Endothelial cell of umbilical vein (primary cell): ENCODE measurements at regions of chr2 and their contacts with region 1.

Region 1: GRCh38 chr2:172465417-172466334 is 38.3 kb downstream of the ITGA6 start:
- DNase-seq: peak; percentile 79
- H3K4me3 ChIP-seq: no peak overlapping the region
- H3K27ac ChIP-seq: no peak overlapping the region
- H3K4me1 ChIP-seq: peaks cover 27% of the 10 kb centered on the region
- H3K27me3 ChIP-seq: no peaks in the 10 kb centered on the region
- CTCF ChIP-seq: peak; percentile 71 to 75
- POLR2A ChIP-seq: no peak

Region 2: DNA sequence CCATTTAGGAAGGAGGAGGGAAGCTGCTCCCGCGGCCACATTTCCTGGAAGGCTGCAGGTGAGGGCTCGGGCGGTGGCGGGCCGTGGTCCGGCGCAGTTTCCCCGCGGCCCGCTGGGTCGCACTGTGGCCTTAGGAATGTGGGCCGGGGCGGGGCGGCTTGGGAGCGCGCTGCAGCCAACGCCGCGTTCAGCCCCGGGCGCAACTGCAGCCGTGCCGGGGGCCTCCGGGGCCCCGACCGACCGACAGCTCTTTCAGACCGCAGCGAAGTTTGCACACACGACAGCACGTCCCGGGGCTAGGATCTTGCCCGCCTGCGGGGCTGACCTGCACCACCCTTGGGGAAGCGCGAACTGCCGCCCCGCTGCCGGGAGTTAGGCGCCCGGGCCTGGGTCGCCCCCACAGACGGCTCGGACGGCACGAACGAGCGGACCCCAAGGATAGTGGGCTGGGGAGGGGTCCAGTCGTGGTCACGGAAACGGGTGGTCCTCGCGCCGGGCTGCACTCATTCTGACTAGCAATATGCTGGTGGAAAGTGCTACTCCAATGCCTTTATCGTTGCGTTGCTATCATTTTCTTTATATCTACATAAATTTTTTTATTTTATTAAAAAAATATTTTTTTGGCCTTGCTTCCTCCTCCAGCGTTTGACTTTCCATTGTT is 293.0 kb before region 1 on chr2:
- CTCF ChIA-PET with region 1: interaction called, 263 read pairs
- POLR2A ChIA-PET with region 1: no interaction called
- dilution Hi-C with region 1: no loop called
- intact Hi-C with region 1: loop called (anchors 1 kb)
- DNase-seq: peak; percentile 52
- H3K4me3 ChIP-seq: peak overlapping the region; percentile 12 to 50 (median 50)
- H3K27ac ChIP-seq: no peak overlapping the region
- H3K4me1 ChIP-seq: peaks cover 4% of the 10 kb centered on the region
- H3K27me3 ChIP-seq: no peaks in the 10 kb centered on the region
- CTCF ChIP-seq: peak; percentile 83 to 90
- POLR2A ChIP-seq: no peak

Region 3: GRCh38 chr2:172234716-172235691 is 230.7 kb before region 1 on chr2:
- CTCF ChIA-PET with region 1: interaction called, 18 read pairs
- POLR2A ChIA-PET with region 1: no interaction called
- dilution Hi-C with region 1: no loop called
- intact Hi-C with region 1: loop called (anchors 1 kb)
- DNase-seq: peak; percentile 45
- H3K4me3 ChIP-seq: peak overlapping the region; percentile 27 to 57 (median 57)
- H3K27ac ChIP-seq: no peak overlapping the region
- H3K4me1 ChIP-seq: peaks cover 31% of the 10 kb centered on the region
- H3K27me3 ChIP-seq: no peaks in the 10 kb centered on the region
- CTCF ChIP-seq: peak in 1 of 2 donors; percentile 26
- POLR2A ChIP-seq: no peak

Region 4: GRCh38 chr2:172307800-172308199 is 157.9 kb before region 1 on chr2:
- CTCF ChIA-PET with region 1: interaction called, 16 read pairs
- POLR2A ChIA-PET with region 1: no interaction called
- dilution Hi-C with region 1: no loop called
- intact Hi-C with region 1: loop called (anchors 5 kb)
- DNase-seq: peak; percentile 94
- H3K4me3 ChIP-seq: no peak overlapping the region
- H3K27ac ChIP-seq: peak overlapping the region; percentile 88
- H3K4me1 ChIP-seq: peaks cover 31% of the 10 kb centered on the region
- H3K27me3 ChIP-seq: no peaks in the 10 kb centered on the region
- CTCF ChIP-seq: no peak
- POLR2A ChIP-seq: no peak

Region 5: GRCh38 chr2:172434821-172435605 is 30.7 kb before region 1 on chr2:
- CTCF ChIA-PET with region 1: interaction called, 167 read pairs
- POLR2A ChIA-PET with region 1: interaction called, 3 read pairs
- dilution Hi-C with region 1: no loop called
- intact Hi-C with region 1: no loop called
- DNase-seq: no peak
- H3K4me3 ChIP-seq: no peak overlapping the region
- H3K27ac ChIP-seq: no peak overlapping the region
- H3K4me1 ChIP-seq: peaks cover 60% of the 10 kb centered on the region
- H3K27me3 ChIP-seq: no peaks in the 10 kb centered on the region
- CTCF ChIP-seq: no peak
- POLR2A ChIP-seq: no peak

Region 6: GRCh38 chr2:172513935-172514586 is 48.4 kb after region 1 on chr2:
- CTCF ChIA-PET with region 1: no interaction called
- POLR2A ChIA-PET with region 1: no interaction called
- dilution Hi-C with region 1: no loop called
- intact Hi-C with region 1: no loop called
- DNase-seq: no peak
- H3K4me3 ChIP-seq: no peak overlapping the region
- H3K27ac ChIP-seq: no peak overlapping the region
- H3K4me1 ChIP-seq: no peaks in the 10 kb centered on the region
- H3K27me3 ChIP-seq: no peaks in the 10 kb centered on the region
- CTCF ChIP-seq: no peak
- POLR2A ChIP-seq: no peak

Region 7: DNA sequence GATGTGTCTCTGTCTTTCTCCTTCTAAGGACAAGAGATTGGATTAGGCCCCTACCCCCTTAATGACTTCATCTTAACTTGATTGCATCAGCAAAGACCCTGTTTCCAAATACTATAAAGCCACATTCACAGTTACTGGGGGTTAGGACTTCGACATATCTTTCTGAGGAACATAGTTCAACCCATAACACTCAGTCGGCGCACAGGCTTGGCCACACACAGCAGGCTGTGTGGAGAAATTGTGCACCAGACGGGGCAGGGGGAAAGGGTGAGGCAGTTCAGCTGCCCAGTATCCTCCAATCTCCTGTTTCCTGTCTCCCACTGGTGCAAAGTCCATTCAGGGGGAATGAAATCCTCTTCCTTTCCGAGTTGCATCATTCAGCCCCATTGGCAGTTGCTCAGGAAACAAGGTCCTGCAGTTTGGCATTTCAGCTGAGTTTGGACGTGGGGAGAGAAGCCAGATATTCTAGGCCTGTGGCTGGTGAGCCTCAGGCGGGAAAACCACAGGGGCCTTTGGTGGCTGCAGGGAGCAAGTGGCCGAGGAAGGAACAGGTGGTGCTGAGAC is 260.6 kb after region 1 on chr2:
- CTCF ChIA-PET with region 1: no interaction called
- POLR2A ChIA-PET with region 1: no interaction called
- dilution Hi-C with region 1: no loop called
- intact Hi-C with region 1: no loop called
- DNase-seq: peak; percentile 31
- H3K4me3 ChIP-seq: no peak overlapping the region
- H3K27ac ChIP-seq: no peak overlapping the region
- H3K4me1 ChIP-seq: no peaks in the 10 kb centered on the region
- H3K27me3 ChIP-seq: peaks cover 0 to 5% of the 10 kb centered on the region in 2 experiments
- CTCF ChIP-seq: no peak
- POLR2A ChIP-seq: no peak